ENCODE measurements at regions of chr6 and their contacts with region 1.

Region 1: DNA sequence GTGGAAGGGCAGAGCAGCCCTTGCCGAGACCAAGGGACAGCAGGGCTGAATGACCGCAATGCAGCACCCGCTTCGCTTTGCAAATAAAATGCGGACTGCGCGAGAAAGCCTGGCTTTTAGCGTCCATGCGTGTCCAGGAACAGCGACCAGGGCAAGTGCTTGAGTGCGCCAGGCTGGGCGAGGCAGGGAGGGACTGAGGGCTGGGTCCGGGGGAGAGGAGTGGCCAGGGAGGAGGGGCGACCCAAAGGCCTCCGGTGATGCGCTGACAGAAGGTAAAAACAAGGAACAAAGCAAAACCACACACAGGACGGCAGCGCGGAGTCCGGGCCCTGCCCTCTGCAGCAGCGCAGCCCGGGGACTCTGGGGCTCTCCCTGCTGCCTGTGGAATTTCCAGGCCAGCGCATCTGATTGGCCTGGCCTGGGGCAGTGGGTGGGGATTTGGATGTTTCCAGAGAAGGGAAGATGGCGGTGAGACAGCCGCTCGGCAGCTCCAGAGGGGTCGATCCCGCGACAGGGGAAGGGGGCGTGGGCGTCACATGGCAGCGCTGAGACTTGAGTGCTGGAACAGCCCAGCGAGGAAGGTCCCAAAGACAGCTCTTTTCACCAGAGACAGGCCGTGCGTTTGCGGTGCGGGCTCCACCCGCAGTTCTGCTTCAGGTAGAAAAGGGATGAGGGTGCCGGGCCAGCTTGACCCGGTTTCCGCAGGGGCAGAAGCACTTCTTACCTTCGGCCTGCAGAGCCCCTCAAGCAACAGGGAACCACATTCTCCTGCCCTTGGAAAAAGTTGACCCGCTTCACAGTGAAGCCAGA is 51.8 kb downstream of the SSR1 start:
- DNase-seq: no peak
- H3K4me3 ChIP-seq: peak overlapping the region; percentile 55 to 73
- H3K27ac ChIP-seq: peak overlapping the region; percentile 78
- H3K4me1 ChIP-seq: peaks cover 17% of the 10 kb centered on the region
- H3K27me3 ChIP-seq: no peaks in the 10 kb centered on the region
- CTCF ChIP-seq: no peak
- POLR2A ChIP-seq: no peak

Region 2: GRCh38 chr6:5909721-5910120 is 1351.5 kb before region 1 on chr6:
- intact Hi-C with region 1: loop called (anchors 5 kb)
- DNase-seq: no peak
- H3K4me3 ChIP-seq: no peak overlapping the region
- H3K27ac ChIP-seq: no peak overlapping the region
- H3K4me1 ChIP-seq: peaks cover 15% of the 10 kb centered on the region
- H3K27me3 ChIP-seq: no peaks in the 10 kb centered on the region
- CTCF ChIP-seq: no peak
- POLR2A ChIP-seq: no peak

Region 3: DNA sequence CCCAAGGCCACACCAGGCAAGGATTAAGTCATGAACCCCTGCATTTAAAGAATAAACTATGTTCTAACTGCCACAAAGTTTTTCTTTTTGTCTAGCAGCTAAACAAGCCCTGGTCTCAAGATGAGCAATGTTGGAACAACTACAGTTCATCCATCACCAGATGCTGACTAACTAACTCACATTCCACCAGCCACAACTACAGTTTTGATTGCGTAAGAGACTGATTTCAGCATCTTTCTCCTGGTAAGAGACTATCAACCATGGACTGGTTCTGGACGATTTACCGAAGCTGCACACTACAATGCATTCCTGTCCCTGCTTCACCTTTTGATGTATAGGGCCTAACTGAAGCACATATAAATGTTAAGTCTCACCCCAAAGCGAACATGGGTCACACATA is 983.8 kb before region 1 on chr6:
- intact Hi-C with region 1: no loop called
- DNase-seq: no peak
- H3K4me3 ChIP-seq: no peak overlapping the region
- H3K27ac ChIP-seq: no peak overlapping the region
- H3K4me1 ChIP-seq: no peaks in the 10 kb centered on the region
- H3K27me3 ChIP-seq: no peaks in the 10 kb centered on the region
- CTCF ChIP-seq: no peak
- POLR2A ChIP-seq: no peak

Measured in vagina (tissue), 2 donors.